GM13976 (cell line): ENCODE measurements at regions of chr16 and their contacts with region 1.

Region 1: GRCh38 chr16:14285513-14286385 is 214.6 kb downstream of the MRTFB start:
- DNase-seq: peak; percentile 95
- CTCF ChIP-seq: no peak

Region 2: GRCh38 chr16:13138528-13138927 is 1147.2 kb before region 1 on chr16:
- in situ Hi-C with region 1: no loop called
- DNase-seq: no peak
- CTCF ChIP-seq: no peak

Region 3: GRCh38 chr16:13919683-13920509 is 365.9 kb before region 1 on chr16 and contains the start of gene ERCC4:
- in situ Hi-C with region 1: loop called (anchors 10 kb)
- DNase-seq: peak; percentile 99
- CTCF ChIP-seq: peak; percentile 90

Region 4: GRCh38 chr16:14389359-14389758 is 103.6 kb after region 1 on chr16:
- in situ Hi-C with region 1: no loop called
- DNase-seq: no peak
- CTCF ChIP-seq: no peak